H1 (cell line): ENCODE measurements at regions of chr11 and their contacts with region 1.

Region 1: DNA sequence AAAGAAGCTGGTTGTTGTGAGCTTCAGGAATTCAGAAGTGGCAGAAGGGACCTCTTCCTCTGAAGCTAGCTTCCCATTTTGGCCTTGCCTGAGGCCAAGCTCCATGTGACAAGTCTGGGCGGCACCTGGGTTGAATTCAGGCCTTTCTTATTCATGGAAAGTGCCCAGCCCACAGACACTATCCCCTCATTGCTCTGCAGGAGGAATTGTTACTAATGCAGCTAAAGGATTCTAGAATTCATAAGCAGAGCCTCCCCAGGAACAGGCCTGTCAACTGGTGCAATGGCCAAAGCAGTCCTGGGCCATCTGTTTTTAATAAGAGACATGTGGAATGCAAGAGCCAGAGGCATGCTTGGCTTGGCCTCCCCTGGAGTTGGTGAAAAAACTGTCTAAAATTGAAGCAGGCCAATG is 71.4 kb downstream of the SLC1A2 start:
- DNase-seq: no peak
- H3K4me3 ChIP-seq: no peak overlapping the region
- H3K27ac ChIP-seq: no peak overlapping the region
- H3K4me1 ChIP-seq: peaks cover 0 to 5% (median 1%) of the 10 kb centered on the region in 4 experiments; a peak in 3 of 7 replicates
- H3K27me3 ChIP-seq: peaks cover 0 to 7% (median 2%) of the 10 kb centered on the region in 4 experiments; a peak in 4 of 7 replicates
- CTCF ChIP-seq: no peak
- EP300 ChIP-seq: no peak
- POLR2A ChIP-seq: no peak
- RAD21 ChIP-seq: no peak

Region 2: GRCh38 chr11:35321532-35322359 is 26.2 kb before region 1 on chr11:
- CTCF ChIA-PET with region 1: no interaction called
- POLR2A ChIA-PET with region 1: no interaction called
- DNase-seq: no peak
- H3K4me3 ChIP-seq: no peak overlapping the region
- H3K27ac ChIP-seq: no peak overlapping the region
- H3K4me1 ChIP-seq: peaks cover 0 to 5% (median 0%) of the 10 kb centered on the region in 4 experiments; a peak in 1 of 7 replicates
- H3K27me3 ChIP-seq: no peaks in the 10 kb centered on the region; a peak in 1 of 7 replicates
- CTCF ChIP-seq: no peak
- EP300 ChIP-seq: no peak
- POLR2A ChIP-seq: no peak
- RAD21 ChIP-seq: no peak

Region 3: DNA sequence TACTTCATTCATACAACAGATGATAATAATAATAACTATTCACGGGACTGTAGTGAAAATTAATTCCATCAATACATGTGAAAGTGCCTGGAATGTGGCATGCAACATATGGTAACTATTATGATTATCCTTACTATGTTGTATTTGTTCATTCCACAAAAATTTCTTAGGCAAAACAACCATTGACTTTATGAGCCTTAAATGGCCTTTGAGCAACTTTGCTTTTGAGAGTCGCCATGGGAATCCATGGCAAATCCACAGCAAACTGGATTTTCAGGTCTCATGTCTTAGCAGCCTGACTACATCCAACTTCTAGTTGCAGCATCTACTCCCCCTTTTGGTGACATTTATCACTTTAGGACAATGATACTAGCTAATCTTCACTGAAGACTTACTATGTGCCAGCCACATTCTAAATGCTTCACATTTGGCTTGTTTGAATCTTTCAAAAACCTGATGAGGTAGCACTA is 14.6 kb after region 1 on chr11:
- CTCF ChIA-PET with region 1: interaction called, 10 read pairs
- POLR2A ChIA-PET with region 1: no interaction called
- DNase-seq: no peak
- H3K4me3 ChIP-seq: no peak overlapping the region
- H3K27ac ChIP-seq: no peak overlapping the region
- H3K4me1 ChIP-seq: no peaks in the 10 kb centered on the region
- H3K27me3 ChIP-seq: peaks cover 0 to 2% (median 0%) of the 10 kb centered on the region in 4 experiments; a peak in 1 of 7 replicates
- CTCF ChIP-seq: peak in 1 of 3 experiments; percentile 35; a peak in 1 of 4 replicates
- EP300 ChIP-seq: no peak
- POLR2A ChIP-seq: no peak
- RAD21 ChIP-seq: peak; percentile 16 to 27; a peak in 3 of 4 replicates